Activated naive CD4-positive, alpha-beta T cell treated with anti-CD3 and anti-CD28 coated beads for 36 hours (primary cell): ENCODE measurements at regions of chr17 and their contacts with region 1.

Region 1: GRCh38 chr17:76681222-76682137 is 29.3 kb downstream of the MXRA7 start:
- DNase-seq: peak; percentile 83
- H3K4me3 Mint-ChIP-seq: no peak overlapping the region
- H3K27ac Mint-ChIP-seq: no peak overlapping the region
- H3K4me1 Mint-ChIP-seq: no peaks in the 10 kb centered on the region
- H3K27me3 Mint-ChIP-seq: no peaks in the 10 kb centered on the region

Region 2: GRCh38 chr17:76523084-76524037 is 158.1 kb before region 1 on chr17:
- CTCF ChIA-PET with region 1: interaction called, 7 read pairs
- intact Hi-C with region 1: loop called (anchors 1 kb)
- DNase-seq: peak; percentile 84
- H3K4me3 Mint-ChIP-seq: peak overlapping the region; percentile 19
- H3K27ac Mint-ChIP-seq: no peak overlapping the region
- H3K4me1 Mint-ChIP-seq: peaks cover 17% of the 10 kb centered on the region
- H3K27me3 Mint-ChIP-seq: no peaks in the 10 kb centered on the region

Region 3: GRCh38 chr17:76623271-76624146 is 58.0 kb before region 1 on chr17:
- CTCF ChIA-PET with region 1: interaction called, 19 read pairs
- intact Hi-C with region 1: no loop called
- DNase-seq: peak; percentile 83
- H3K4me3 Mint-ChIP-seq: no peak overlapping the region
- H3K27ac Mint-ChIP-seq: no peak overlapping the region
- H3K4me1 Mint-ChIP-seq: peaks cover 7% of the 10 kb centered on the region
- H3K27me3 Mint-ChIP-seq: peaks cover 7% of the 10 kb centered on the region

Region 4: DNA sequence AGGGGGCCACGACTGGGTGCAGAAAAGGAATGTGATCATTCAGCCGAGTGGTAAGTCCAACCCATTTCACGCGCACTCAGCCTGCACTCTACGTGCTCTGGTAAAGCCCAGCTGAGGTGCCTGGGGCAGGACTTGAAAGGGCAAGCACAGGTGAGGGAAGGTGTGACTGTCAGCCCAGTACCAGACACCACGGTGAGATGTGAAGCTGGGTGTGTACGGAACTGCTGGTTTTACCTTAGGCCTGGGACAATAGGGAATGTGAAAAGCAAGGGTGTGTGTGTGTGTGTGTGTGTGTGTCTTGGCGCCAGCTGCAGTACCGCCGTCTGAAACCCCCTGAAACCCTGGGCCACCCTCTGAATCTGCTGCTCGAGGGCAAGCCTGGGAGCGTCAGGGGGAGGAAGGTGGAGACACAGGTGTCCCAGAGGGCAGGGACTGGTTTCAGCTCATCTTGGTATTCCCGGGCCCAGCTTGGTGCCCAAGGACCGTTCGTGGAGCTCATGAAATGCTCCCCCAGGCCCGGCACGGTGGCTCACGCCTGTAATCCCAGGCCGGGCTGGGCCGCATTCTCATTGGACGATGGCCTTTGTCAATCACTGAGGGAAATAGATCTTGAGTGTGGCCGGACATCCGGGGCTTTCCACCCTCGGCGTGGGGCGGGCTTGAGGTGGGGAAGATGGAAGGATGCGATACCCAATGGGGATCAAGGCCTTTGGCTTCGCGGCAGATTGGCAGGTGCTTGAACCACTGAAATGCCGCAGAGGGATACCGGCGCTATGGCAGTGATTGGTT is 10.2 kb before region 1 on chr17:
- CTCF ChIA-PET with region 1: interaction called, 11 read pairs
- intact Hi-C with region 1: no loop called
- DNase-seq: peak; percentile 100
- H3K4me3 Mint-ChIP-seq: peak overlapping the region; percentile 93
- H3K27ac Mint-ChIP-seq: peak overlapping the region; percentile 92
- H3K4me1 Mint-ChIP-seq: peaks cover 29% of the 10 kb centered on the region
- H3K27me3 Mint-ChIP-seq: no peaks in the 10 kb centered on the region

Region 5: GRCh38 chr17:76714822-76715495 is 33.5 kb after region 1 on chr17:
- CTCF ChIA-PET with region 1: interaction called, 10 read pairs
- intact Hi-C with region 1: no loop called
- DNase-seq: peak; percentile 90
- H3K4me3 Mint-ChIP-seq: no peak overlapping the region
- H3K27ac Mint-ChIP-seq: peak overlapping the region; percentile 82
- H3K4me1 Mint-ChIP-seq: peaks cover 32% of the 10 kb centered on the region
- H3K27me3 Mint-ChIP-seq: no peaks in the 10 kb centered on the region

Region 6: DNA sequence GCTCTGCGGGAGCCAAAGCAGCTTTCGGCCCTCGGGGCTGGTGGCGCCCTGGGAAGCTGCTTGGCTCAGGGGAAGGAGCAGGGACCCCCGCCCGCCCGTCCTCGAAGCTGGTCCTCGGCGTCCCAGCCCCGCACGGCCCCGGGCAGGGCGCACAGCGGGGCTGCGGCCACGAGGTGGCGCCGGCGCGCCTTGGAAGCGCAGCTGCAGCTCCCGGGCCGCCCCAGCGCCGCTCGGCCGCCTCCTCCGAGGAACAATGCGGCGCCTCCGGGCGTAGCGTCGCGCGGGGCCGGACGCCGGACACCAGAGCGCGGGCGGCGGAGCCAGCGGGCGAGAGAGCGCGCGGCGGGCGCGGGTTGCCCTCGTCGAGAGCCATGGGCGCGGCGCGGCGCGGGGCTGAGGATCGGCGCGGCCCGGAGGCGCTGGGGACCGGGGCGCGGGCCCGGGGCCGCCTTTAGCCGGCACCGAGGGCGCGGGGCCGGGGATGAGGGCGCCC is 186.7 kb after region 1 on chr17 and contains the start of gene MGAT5B:
- CTCF ChIA-PET with region 1: no interaction called
- intact Hi-C with region 1: no loop called
- DNase-seq: peak; percentile 73
- H3K4me3 Mint-ChIP-seq: peak within 1 kb of the TSS; percentile 59
- H3K27ac Mint-ChIP-seq: no peak within 1 kb of the TSS
- H3K4me1 Mint-ChIP-seq: peaks cover 7% of the 10 kb centered on the region
- H3K27me3 Mint-ChIP-seq: peaks cover 21% of the 10 kb centered on the region
- total RNA-seq, gene MGAT5B: 0.19 TPM in 1 of 2 experiments, not detected in the other